Sciatic nerve (tissue), 2 donors: ENCODE measurements at regions of chr10 and their contacts with region 1.

Region 1: DNA sequence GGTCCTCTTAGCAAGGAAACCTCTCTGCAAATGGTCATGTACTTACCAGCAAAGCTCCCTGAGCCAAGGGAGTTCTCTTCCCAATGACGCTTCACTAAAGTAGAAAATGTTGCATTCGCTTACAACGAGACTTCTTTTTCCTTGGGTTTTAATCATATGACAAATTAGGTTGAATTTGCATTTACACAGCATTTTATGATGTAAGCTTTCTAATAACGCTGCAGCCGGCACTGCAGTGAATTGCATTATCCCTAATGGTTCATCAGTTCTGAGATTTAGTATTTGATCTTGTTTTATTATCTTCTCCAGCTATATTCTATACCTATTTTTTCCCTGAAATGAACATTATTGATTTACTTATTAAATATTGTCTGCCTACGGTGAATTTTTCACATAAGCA is 339.3 kb upstream of the PFKP start:
- DNase-seq: no peak
- ATAC-seq: no peak

Region 2: DNA sequence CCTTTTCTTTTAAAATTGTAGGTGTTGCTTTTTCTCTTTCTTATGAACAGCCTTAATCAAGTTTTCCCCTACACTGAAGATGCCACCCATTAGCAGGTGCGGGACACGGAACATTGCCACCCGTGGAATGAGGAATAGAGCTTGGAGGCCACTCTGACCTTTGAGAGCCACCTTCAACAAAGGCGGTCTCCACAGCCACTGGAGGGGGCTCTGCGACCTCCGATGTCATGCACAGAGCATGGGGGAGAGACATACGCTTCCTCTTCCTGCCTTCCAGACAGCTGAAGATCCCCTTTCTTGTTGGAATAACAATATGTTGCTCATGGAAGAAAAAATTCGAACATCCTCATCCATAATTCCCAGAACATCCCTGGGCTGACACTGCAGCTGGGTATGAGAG is 1029.9 kb before region 1 on chr10:
- intact Hi-C with region 1: loop called (anchors 5 kb)
- DNase-seq: no peak
- ATAC-seq: no peak

Region 3: GRCh38 chr10:2670864-2671263 is 57.2 kb before region 1 on chr10:
- intact Hi-C with region 1: no loop called
- DNase-seq: no peak
- ATAC-seq: no peak